Psoas muscle (tissue), 8 donors: ENCODE measurements at regions of chr1 and their contacts with region 1.

Region 1: DNA sequence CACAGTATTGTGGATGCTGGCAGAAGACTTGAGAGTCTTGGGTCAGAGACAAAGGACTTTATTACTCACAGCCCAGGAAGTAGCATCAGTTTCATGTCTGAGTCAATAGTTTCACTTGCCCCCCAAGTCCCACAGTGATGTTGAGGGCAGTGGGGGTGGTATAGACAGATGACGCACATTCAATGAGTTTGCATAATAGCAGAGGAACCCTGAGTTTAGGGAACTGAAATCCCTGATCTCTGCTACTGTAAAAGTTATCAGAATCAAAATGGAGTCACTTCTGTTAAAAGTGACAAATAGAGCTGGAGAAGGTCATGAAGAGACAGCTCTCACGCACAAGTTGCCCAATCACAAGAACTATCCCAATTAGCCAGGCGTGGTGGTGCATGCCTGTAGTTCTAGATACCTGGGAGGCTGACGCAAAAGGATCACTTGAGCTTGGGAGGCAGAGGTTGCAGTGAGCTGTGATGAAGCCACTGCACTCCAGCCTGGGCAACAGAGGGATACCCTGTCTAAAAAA is 11.5 kb upstream of the HCRTR1 start:
- DNase-seq: no peak
- ATAC-seq: no peak
- H3K4me3 ChIP-seq: no peak overlapping the region
- H3K27ac ChIP-seq: no peak overlapping the region
- H3K4me1 ChIP-seq: no peaks in the 10 kb centered on the region
- H3K27me3 ChIP-seq: no peaks in the 10 kb centered on the region
- CTCF ChIP-seq: no peak

Region 2: DNA sequence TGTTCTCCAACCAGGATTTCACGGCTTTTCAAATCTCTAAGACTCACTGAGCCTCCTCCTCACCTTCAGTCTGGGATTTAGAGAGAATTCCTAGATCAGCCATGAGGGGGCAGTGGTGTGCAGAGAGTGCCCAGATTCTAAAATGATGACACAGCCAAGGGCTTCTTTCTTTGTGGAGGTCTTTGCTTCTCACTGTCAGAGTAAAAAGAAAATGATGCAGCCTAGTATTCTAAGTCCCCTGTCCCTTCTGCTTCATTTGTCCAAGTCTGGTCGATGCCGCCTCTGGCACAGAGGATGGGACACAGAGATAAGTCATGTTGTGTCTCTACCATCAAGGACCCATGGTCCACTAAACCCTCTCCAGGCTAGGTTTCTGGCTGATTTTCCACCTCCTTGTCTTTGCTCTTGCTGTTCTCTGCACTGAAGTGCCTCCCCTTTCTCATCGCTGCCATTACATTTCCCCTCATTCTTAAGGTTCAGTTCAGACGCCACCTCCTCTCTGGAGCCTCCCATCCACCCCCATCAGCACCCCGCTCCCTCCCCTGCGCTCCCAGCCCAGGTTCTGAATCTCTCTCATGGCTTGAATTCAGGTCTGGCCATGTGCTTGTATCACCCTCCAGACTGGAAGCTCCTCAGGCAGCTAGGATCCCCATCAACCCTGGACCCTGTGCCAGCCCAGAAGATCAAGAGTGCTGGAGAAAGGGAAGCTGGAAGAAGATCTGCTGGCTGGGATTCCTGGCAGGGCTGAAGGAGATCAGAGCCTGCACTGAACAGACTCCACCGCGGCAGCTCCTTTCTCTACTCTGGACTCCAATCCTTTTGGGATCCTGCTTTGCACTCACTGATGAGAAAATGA is 41.6 kb before region 1 on chr1:
- intact Hi-C with region 1: loop called in 1 of 2 experiments (anchors 5 kb)
- DNase-seq: no peak
- ATAC-seq: peak; percentile 66 to 89 (median 76)
- H3K4me3 ChIP-seq: no peak overlapping the region
- H3K27ac ChIP-seq: no peak overlapping the region
- H3K4me1 ChIP-seq: peaks cover 4% of the 10 kb centered on the region
- H3K27me3 ChIP-seq: no peaks in the 10 kb centered on the region
- CTCF ChIP-seq: peak; percentile 95

Region 3: GRCh38 chr1:31593770-31594632 is 12.0 kb before region 1 on chr1:
- intact Hi-C with region 1: loop called in 1 of 2 experiments (anchors 1 kb)
- DNase-seq: peak; percentile 80 to 85
- ATAC-seq: peak; percentile 90 to 93 (median 91)
- H3K4me3 ChIP-seq: no peak overlapping the region
- H3K27ac ChIP-seq: no peak overlapping the region
- H3K4me1 ChIP-seq: no peaks in the 10 kb centered on the region
- H3K27me3 ChIP-seq: peaks cover 0 to 13% (median 4%) of the 10 kb centered on the region in 3 donors
- CTCF ChIP-seq: peak; percentile 88